Body of pancreas (tissue), 4 donors: ENCODE measurements at regions of chr17 and their contacts with region 1.

Region 1: DNA sequence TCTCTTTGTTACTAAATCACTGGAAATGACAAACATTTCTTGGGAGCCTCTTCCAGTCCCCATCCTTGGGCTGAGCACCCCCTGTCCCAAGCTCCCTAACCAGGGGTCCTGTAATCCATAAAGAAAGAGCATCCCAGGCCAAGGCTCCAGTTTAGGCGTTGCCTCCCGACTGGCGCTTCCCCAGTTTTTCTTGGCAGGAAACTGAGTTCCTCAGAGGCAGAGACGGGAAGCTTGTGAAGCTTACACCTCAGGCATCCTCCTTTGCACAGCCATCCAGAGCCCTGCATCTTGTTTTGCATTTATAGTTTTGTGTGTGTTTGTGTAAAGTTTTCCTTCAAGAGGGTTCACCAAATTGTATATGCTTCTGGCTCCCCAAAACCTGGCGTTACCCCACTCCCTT is 7.1 kb downstream of the COPZ2 start:
- DNase-seq: no peak
- ATAC-seq: no peak
- H3K4me3 ChIP-seq: no peak overlapping the region
- H3K27ac ChIP-seq: no peak overlapping the region
- H3K4me1 ChIP-seq: peaks cover 13% of the 10 kb centered on the region
- H3K27me3 ChIP-seq: no peaks in the 10 kb centered on the region
- CTCF ChIP-seq: no peak
- POLR2A ChIP-seq: no peak

Region 2: DNA sequence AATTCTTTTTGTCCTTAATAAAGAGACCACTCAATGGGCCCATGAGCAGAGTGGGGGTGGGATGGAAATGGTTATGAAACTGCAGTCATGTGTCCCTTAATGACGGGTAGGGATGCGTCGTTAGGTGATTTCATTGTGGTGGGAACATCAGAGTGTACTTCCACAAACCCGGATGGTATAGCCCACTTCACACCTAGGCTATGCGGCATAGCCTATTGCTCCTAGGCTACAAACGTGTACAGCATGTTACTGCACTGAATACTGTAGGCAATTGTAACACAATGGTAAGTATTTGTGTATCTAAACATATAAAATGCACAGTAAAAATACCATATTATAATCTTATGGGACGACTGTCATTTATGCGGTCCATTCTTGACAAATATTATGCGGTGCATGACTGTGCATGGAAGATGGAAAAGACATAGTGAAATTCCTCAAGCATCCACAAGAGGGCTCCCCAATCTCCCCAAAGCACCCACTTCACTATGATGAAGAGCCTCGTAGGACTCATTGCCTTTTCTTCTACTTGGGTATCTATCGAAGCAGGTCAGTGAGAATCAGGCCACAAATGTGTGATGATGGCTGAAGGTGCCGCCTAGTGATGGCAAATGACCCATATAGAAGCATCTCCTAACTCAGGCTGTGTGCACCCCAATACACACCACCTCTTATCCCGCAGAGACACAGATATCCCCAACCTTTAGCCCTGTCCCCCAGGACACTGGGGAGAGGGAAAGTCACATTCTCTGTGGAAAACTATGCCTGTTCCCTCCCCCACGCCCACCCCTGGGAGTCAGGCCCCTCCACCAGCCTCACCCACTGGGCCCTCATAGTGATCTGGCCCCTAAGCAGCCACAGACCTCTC is 254.0 kb before region 1 on chr17:
- intact Hi-C with region 1: no loop called
- DNase-seq: peak; percentile 28 to 33 (median 30)
- ATAC-seq: peak; percentile 84
- H3K4me3 ChIP-seq: no peak overlapping the region
- H3K27ac ChIP-seq: no peak overlapping the region
- H3K4me1 ChIP-seq: no peaks in the 10 kb centered on the region
- H3K27me3 ChIP-seq: peaks cover 0 to 16% of the 10 kb centered on the region in 2 donors
- CTCF ChIP-seq: peak; percentile 39 to 71 (median 64)
- POLR2A ChIP-seq: no peak

Region 3: GRCh38 chr17:48074315-48075081 is 44.0 kb after region 1 on chr17:
- intact Hi-C with region 1: loop called (anchors 5 kb)
- DNase-seq: peak; percentile 78 to 88 (median 88)
- ATAC-seq: peak; percentile 94
- H3K4me3 ChIP-seq: no peak overlapping the region
- H3K27ac ChIP-seq: peak overlapping the region in 1 of 4 donors; percentile 27
- H3K4me1 ChIP-seq: no peaks in the 10 kb centered on the region
- H3K27me3 ChIP-seq: no peaks in the 10 kb centered on the region
- CTCF ChIP-seq: peak; percentile 54 to 92 (median 80)
- POLR2A ChIP-seq: no peak

Region 4: DNA sequence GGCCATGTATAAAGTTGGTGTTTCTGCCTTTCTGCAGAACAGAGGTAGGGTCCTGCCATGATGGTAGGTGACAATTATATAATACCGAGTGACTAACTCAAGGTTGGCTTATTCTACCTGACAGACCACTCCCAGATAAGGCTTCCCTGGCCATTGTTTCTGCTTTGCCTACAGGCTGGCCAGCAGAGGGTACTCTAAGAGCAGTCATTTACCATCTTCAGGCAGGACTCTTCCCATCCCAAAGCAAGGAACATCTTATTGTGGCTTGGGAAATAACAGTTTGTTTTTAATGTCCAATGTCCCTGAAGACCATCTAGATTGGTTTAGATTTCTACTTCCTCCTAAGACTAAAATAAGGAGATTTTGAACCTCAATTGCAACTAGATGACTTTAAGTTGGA is 151.1 kb after region 1 on chr17:
- intact Hi-C with region 1: no loop called
- DNase-seq: peak in 1 of 4 donors; percentile 7
- ATAC-seq: no peak
- H3K4me3 ChIP-seq: no peak overlapping the region
- H3K27ac ChIP-seq: no peak overlapping the region
- H3K4me1 ChIP-seq: no peaks in the 10 kb centered on the region
- H3K27me3 ChIP-seq: no peaks in the 10 kb centered on the region
- CTCF ChIP-seq: no peak
- POLR2A ChIP-seq: no peak